ENCODE measurements at regions of chr13 and their contacts with region 1.

Region 1: GRCh38 chr13:95714142-95714829 is 37.3 kb downstream of the DNAJC3 start:
- DNase-seq: peak; percentile 22 to 65
- ATAC-seq: peak; percentile 90 to 91
- H3K4me3 ChIP-seq: no peak overlapping the region
- H3K27ac ChIP-seq: peak overlapping the region; percentile 58 to 84
- H3K4me1 ChIP-seq: peaks cover 17% of the 10 kb centered on the region
- CTCF ChIP-seq: no peak
- EP300 ChIP-seq: peak; percentile 56 to 61; a peak in 3 of 5 replicates
- POLR2A ChIP-seq: no peak
- RAD21 ChIP-seq: no peak

Region 2: GRCh38 chr13:95650696-95651095 is 63.6 kb before region 1 on chr13:
- CTCF ChIA-PET with region 1: no interaction called
- POLR2A ChIA-PET with region 1: no interaction called
- DNase-seq: no peak
- ATAC-seq: no peak
- H3K4me3 ChIP-seq: no peak overlapping the region
- H3K27ac ChIP-seq: no peak overlapping the region
- H3K4me1 ChIP-seq: no peaks in the 10 kb centered on the region
- CTCF ChIP-seq: no peak
- EP300 ChIP-seq: no peak
- POLR2A ChIP-seq: no peak
- RAD21 ChIP-seq: no peak

Region 3: DNA sequence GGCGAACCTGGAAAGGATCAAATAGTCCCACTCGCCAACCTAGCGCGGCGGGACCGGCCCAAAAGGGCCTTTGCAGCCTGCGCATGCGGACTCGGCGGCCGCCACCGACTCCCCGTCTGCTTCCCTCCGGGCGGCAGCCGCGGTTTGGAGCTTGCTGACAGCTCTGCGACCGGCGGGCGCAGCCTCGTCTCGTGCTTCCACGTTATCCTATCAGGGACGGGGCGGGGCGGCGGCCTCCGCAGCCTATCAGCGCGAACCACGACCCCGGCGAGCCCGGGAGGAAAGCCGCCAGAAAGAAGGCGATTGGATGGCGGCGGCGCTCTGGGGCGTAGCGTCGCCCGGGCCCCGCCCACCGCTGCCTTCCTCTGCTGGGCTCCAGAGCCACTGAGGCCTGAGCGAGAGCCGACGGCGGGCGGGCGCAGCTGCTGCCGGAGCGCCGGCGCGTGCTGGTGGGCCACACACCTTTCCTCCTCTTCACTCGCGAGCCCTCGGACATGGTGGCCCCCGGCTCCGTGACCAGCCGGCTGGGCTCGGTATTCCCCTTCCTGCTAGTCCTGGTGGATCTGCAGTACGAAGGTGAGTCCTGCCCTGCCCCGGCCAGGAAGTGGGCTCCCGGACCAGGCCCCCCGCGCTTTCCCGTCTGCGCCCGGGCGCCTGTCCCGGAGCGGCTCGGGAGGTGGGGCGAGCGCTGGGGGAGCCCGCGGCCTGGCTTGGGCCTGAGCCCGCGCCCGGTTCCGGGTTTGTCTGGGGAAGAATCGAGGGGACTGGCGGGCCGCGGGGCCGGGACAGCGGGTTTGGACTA is 37.3 kb before region 1 on chr13 and contains the start of gene DNAJC3:
- CTCF ChIA-PET with region 1: no interaction called
- POLR2A ChIA-PET with region 1: interaction called, 10 read pairs
- DNase-seq: peak; percentile 86 to 96
- ATAC-seq: peak; percentile 96 to 97
- H3K4me3 ChIP-seq: peak within 1 kb of the TSS; percentile 82
- H3K27ac ChIP-seq: peak within 1 kb of the TSS; percentile 82 to 95
- H3K4me1 ChIP-seq: peaks cover 27% of the 10 kb centered on the region; the same call in 2 of the 3 replicates
- CTCF ChIP-seq: no peak
- EP300 ChIP-seq: no peak
- POLR2A ChIP-seq: peak; percentile 72
- RAD21 ChIP-seq: no peak
- polyA plus RNA-seq, gene DNAJC3: 18.6 and 21.9 TPM in 2 replicates

Measured in A549 (cell line).